HepG2 (cell line): ENCODE measurements at regions of chr22 and their contacts with region 1.

Region 1: GRCh38 chr22:49930739-49931412 is 12.4 kb downstream of the CRELD2 start:
- DNase-seq: peak; percentile 81
- ATAC-seq: peak; percentile 65
- H3K4me3 ChIP-seq: no peak overlapping the region
- H3K27ac ChIP-seq: no peak overlapping the region
- H3K4me1 ChIP-seq: peaks cover 49% of the 10 kb centered on the region
- H3K27me3 ChIP-seq: peaks cover 3 to 10% of the 10 kb centered on the region in 2 experiments; a peak in 4 of 5 replicates
- CTCF ChIP-seq: peak; percentile 95
- EP300 ChIP-seq: no peak
- POLR2A ChIP-seq: no peak
- RAD21 ChIP-seq: peak; percentile 90

Region 2: DNA sequence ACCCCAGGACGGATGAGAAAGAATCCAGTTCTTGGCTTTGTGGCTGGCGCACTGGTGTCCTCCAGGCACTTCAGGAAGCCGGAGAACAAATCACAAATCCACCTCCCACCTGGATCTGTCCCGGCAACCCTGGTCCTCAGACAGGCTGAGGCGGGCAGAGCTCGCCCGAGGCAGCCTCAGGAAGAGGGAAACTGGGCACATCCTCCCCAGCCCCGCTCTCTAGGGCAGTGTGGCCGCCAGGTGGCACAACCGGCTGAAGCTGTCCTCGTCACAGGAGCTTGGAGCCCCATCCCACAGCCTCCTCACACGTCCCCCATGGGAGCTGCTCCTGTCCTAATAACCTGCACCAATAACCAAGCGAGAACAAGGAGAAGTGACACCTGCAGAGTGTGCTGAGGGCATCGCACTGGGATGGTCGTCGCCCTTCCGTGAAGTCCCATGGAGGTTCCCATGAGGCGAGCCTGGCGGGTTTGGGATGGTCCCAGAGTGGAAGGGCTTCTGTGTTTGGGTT is 496.7 kb before region 1 on chr22:
- CTCF ChIA-PET with region 1: no interaction called
- POLR2A ChIA-PET with region 1: no interaction called
- in situ Hi-C with region 1: no loop called
- intact Hi-C with region 1: no loop called
- DNase-seq: peak; percentile 10
- ATAC-seq: peak; percentile 93
- H3K4me3 ChIP-seq: no peak overlapping the region
- H3K27ac ChIP-seq: no peak overlapping the region
- H3K4me1 ChIP-seq: no peaks in the 10 kb centered on the region
- H3K27me3 ChIP-seq: peaks cover 2 to 51% of the 10 kb centered on the region in 2 experiments
- CTCF ChIP-seq: peak; percentile 71
- EP300 ChIP-seq: no peak
- POLR2A ChIP-seq: no peak
- RAD21 ChIP-seq: peak; percentile 54

Region 3: DNA sequence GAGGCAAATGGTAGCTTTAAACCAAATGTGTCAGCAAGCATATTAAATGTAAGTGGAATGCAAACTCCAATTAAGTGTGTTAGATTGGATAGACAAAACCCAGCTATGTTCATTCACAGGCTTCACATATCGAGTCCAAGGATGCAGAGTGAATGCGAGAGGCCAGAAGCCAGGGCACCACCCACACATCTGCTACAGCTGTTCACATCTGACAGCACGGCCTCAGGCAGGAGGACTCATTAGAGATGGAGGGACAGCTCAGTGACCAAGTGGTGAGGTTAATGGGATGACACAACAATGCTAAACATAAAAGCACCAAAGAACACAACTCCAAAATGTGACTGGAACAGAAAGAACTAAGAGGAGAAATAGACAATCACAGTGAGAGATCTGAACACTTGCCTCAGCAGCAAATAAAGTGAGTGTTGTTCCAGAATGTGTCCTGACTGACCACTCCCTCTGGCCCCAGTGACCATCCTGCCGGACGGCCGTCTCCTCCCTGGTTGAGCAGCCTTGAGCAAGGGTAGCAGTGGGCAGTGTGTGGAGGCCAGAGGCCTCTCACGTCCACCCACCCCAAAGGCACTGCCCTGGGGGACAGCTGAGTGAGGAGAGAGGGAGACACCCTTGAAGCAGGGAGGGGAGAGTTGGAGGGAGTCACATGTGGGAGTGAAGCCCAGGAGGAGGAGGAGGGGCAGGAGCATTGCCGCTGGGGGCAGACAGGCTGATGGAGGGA is 36.4 kb before region 1 on chr22:
- CTCF ChIA-PET with region 1: no interaction called
- POLR2A ChIA-PET with region 1: no interaction called
- in situ Hi-C with region 1: no loop called
- intact Hi-C with region 1: no loop called
- DNase-seq: no peak
- ATAC-seq: peak; percentile 38
- H3K4me3 ChIP-seq: no peak overlapping the region
- H3K27ac ChIP-seq: no peak overlapping the region
- H3K4me1 ChIP-seq: no peaks in the 10 kb centered on the region
- H3K27me3 ChIP-seq: no peaks in the 10 kb centered on the region
- CTCF ChIP-seq: no peak
- EP300 ChIP-seq: no peak
- POLR2A ChIP-seq: no peak
- RAD21 ChIP-seq: no peak

Region 4: DNA sequence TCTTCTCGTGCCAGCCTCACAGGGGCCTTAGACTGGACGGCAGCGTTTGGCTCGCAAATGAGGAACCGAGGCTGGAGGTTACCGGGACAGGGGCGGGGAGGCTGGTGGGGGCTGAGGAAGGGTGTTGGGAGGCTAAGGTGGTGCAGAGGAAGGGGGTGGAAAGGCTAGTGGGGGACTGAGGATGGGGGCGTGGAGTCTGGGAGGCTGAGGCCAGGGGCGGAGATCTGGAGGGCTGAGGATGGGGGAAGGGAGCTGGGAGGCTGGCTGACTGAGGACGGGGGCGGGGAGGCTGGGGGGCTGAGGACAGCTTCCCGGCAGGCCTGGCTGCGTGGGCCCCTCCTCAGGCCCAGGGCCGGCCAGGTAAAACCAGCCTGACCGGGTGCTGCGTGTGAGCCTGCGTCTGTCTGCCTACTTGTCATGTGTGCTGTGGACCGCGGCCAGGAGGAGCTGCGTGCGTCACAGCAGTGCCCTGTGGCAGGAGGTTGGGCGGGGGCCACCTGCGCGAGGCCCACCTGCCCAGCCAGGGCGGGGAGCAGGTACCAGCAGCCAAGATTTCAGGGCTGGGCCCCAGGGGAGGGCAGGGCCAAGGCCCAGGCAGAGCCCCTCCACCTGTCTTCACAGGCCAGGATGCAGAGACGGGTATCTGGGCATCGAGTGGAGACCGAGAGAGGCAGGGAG is 20.3 kb after region 1 on chr22:
- CTCF ChIA-PET with region 1: no interaction called
- POLR2A ChIA-PET with region 1: interaction called, 283 read pairs
- in situ Hi-C with region 1: no loop called
- intact Hi-C with region 1: loop called (anchors 2 kb)
- DNase-seq: no peak
- ATAC-seq: no peak
- H3K4me3 ChIP-seq: peak overlapping the region; percentile 54 to 77 (median 56); a peak in 5 of 6 replicates
- H3K27ac ChIP-seq: peak overlapping the region; percentile 68
- H3K4me1 ChIP-seq: peaks cover 95% of the 10 kb centered on the region
- H3K27me3 ChIP-seq: no peaks in the 10 kb centered on the region
- CTCF ChIP-seq: no peak
- EP300 ChIP-seq: no peak
- POLR2A ChIP-seq: no peak
- RAD21 ChIP-seq: no peak

Region 5: GRCh38 chr22:49960159-49961004 is 29.5 kb after region 1 on chr22 and contains the start of gene PIM3:
- CTCF ChIA-PET with region 1: interaction called, 4 read pairs
- POLR2A ChIA-PET with region 1: interaction called, 283 read pairs
- in situ Hi-C with region 1: loop called (anchors 5 kb)
- intact Hi-C with region 1: loop called (anchors 2 kb)
- DNase-seq: peak; percentile 94
- ATAC-seq: peak; percentile 67
- H3K4me3 ChIP-seq: peak within 1 kb of the TSS; percentile 97 to 99 (median 97)
- H3K27ac ChIP-seq: peak within 1 kb of the TSS; percentile 87
- H3K4me1 ChIP-seq: peaks cover 75% of the 10 kb centered on the region
- H3K27me3 ChIP-seq: no peaks in the 10 kb centered on the region; a peak in 1 of 5 replicates
- CTCF ChIP-seq: 0 out of 2 replicates have a peak, but pooled peaks have one; percentile 14
- EP300 ChIP-seq: no peak
- POLR2A ChIP-seq: peak in 1 of 2 experiments; percentile 88; a peak in 2 of 4 replicates
- RAD21 ChIP-seq: peak; percentile 60; the same call in 1 of the 2 replicates
- total RNA-seq, gene PIM3: 18.2 and 31.2 TPM in 2 replicates

Region 6: GRCh38 chr22:49970528-49971231 is 39.8 kb after region 1 on chr22:
- CTCF ChIA-PET with region 1: no interaction called
- POLR2A ChIA-PET with region 1: interaction called, 59 read pairs
- in situ Hi-C with region 1: loop called (anchors 5 kb)
- intact Hi-C with region 1: loop called (anchors 5 kb)
- DNase-seq: peak; percentile 97
- ATAC-seq: peak; percentile 54
- H3K4me3 ChIP-seq: peak overlapping the region; percentile 55 to 71 (median 58); a peak in 5 of 6 replicates
- H3K27ac ChIP-seq: peak overlapping the region; percentile 57
- H3K4me1 ChIP-seq: peaks cover 76% of the 10 kb centered on the region
- H3K27me3 ChIP-seq: no peaks in the 10 kb centered on the region
- CTCF ChIP-seq: peak; percentile 47
- EP300 ChIP-seq: peak; percentile 42 to 87; a peak in 3 of 4 replicates
- POLR2A ChIP-seq: peak in 1 of 2 experiments; percentile 59; a peak in 2 of 4 replicates
- RAD21 ChIP-seq: peak; percentile 9

Region 7: DNA sequence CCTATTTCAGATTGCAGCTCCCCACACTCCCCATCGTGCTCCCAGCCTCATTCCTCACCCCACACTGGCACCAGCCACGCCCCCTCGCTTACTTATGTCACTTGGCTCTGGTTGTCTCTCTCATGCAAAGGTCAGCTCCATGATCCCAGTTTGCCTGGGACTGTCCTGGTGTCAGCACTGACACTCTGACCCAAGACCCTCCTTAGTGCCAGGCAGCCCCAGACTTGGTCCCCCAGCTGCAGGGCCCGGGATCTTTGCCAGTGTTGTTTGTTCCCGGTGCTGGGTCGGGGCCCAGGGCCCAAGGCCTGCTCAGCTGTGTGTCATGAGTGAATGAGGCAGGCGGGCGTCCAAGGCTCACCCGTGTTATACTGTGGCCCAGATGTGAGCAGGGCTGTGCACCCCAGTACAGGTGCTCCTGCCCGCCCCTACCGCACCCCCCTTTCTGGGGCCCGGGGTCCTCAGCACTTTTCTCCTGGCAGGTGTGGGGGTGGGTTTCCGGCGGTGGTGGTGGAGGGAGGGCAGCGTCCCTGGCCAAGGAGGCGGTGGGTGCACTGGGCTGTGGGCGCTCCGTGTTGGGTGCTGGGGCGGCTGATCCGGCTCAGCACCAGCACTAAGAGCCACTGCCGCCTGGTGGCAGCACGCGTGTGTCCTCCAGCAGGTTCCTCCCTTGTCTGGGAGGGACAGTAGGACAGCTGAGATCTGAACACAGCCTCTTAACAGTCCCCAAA is 62.2 kb after region 1 on chr22:
- CTCF ChIA-PET with region 1: interaction called, 26 read pairs
- POLR2A ChIA-PET with region 1: no interaction called
- in situ Hi-C with region 1: loop called (anchors 5 kb)
- intact Hi-C with region 1: no loop called
- DNase-seq: peak; percentile 49
- ATAC-seq: peak; percentile 92
- H3K4me3 ChIP-seq: peak overlapping the region in 1 of 3 experiments; percentile 10; a peak in 1 of 6 replicates
- H3K27ac ChIP-seq: no peak overlapping the region
- H3K4me1 ChIP-seq: peaks cover 7% of the 10 kb centered on the region
- H3K27me3 ChIP-seq: peaks cover 3 to 19% of the 10 kb centered on the region in 2 experiments; a peak in 2 of 5 replicates
- CTCF ChIP-seq: peak; percentile 94
- EP300 ChIP-seq: no peak
- POLR2A ChIP-seq: no peak
- RAD21 ChIP-seq: peak; percentile 79

Region 8: GRCh38 chr22:50030297-50031188 is 99.7 kb after region 1 on chr22:
- CTCF ChIA-PET with region 1: interaction called, 63 read pairs
- POLR2A ChIA-PET with region 1: interaction called, 3 read pairs
- in situ Hi-C with region 1: loop called (anchors 5 kb)
- intact Hi-C with region 1: loop called (anchors 1 kb)
- DNase-seq: peak; percentile 44
- ATAC-seq: peak; percentile 93
- H3K4me3 ChIP-seq: peak overlapping the region in 1 of 3 experiments; percentile 16; a peak in 1 of 6 replicates
- H3K27ac ChIP-seq: no peak overlapping the region
- H3K4me1 ChIP-seq: no peaks in the 10 kb centered on the region
- H3K27me3 ChIP-seq: peaks cover 8 to 63% of the 10 kb centered on the region in 2 experiments
- CTCF ChIP-seq: peak; percentile 96
- EP300 ChIP-seq: no peak
- POLR2A ChIP-seq: no peak
- RAD21 ChIP-seq: peak; percentile 99